ENCODE measurements at regions of chr5 and their contacts with region 1.

Region 1: DNA sequence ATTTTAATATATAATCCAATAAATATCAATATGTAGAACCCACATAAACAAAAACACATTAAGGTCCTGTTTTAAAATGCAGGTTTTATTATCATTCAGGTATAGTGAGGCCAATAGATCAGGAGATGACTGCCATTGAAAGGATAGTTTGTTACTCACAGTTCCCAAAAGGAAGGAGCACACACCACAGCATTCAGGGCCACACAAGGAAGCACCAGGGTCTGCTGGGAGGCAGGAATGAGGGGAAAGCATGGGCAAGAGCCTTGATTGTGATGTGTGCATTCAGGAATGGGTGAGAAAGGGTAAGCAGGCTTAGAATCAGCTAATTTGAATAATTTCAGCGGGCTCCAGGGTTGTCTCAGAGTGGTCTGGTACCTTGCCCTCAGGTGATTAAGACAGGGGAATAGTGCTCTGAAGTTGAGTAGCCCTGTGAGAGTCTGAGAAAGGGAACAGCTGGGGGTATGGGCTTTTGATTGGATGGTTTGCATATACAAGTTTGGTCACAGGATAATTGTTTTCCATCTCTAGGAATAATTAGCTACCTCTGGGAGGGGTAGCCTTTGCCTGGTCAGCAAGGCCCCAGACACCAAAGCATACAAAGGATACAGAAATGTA is 19.8 kb upstream of the OTULIN start:
- DNase-seq: no peak
- H3K4me3 Mint-ChIP-seq: no peak overlapping the region
- H3K27ac Mint-ChIP-seq: no peak overlapping the region
- H3K4me1 Mint-ChIP-seq: peaks cover 2% of the 10 kb centered on the region
- H3K27me3 Mint-ChIP-seq: peaks cover 9% of the 10 kb centered on the region

Region 2: DNA sequence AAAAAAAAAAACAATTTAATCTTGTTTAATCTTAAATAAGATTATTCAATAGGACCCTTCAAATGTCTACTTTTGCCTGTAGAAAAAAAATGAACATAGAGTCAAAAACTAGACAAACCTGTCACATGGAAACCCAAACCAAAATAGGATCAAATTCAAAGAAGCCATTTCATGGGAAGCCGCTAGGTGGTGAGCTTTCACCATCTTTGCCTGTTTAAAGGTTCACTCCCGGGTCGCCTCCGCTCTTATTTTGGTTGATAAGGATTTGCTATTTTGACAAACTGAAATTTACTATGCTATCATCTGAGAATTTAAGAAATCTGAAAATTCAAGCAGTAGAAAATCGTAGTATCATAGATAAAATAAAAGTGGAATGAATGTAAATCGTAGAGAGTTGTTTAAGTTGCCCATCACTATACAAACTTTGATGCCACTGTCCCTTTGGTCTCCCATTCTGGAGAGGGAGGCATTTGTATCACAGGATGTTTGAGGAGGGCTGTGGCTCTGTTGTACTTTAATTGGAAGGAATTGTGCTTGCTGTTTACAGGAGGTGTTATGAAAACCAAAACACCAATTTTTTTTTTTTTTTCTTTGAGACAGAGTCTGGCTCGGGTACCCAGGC is 656.8 kb before region 1 on chr5:
- CTCF ChIA-PET with region 1: interaction called, 4 read pairs
- intact Hi-C with region 1: loop called (anchors 1 kb)
- DNase-seq: peak; percentile 55
- H3K4me3 Mint-ChIP-seq: no peak overlapping the region
- H3K27ac Mint-ChIP-seq: no peak overlapping the region
- H3K4me1 Mint-ChIP-seq: no peaks in the 10 kb centered on the region
- H3K27me3 Mint-ChIP-seq: no peaks in the 10 kb centered on the region

Region 3: GRCh38 chr5:14364576-14365472 is 279.9 kb before region 1 on chr5:
- CTCF ChIA-PET with region 1: interaction called, 73 read pairs
- intact Hi-C with region 1: loop called (anchors 1 kb)
- DNase-seq: peak; percentile 34
- H3K4me3 Mint-ChIP-seq: no peak overlapping the region
- H3K27ac Mint-ChIP-seq: no peak overlapping the region
- H3K4me1 Mint-ChIP-seq: peaks cover 24% of the 10 kb centered on the region
- H3K27me3 Mint-ChIP-seq: no peaks in the 10 kb centered on the region

Region 4: GRCh38 chr5:14399054-14399692 is 245.6 kb before region 1 on chr5:
- CTCF ChIA-PET with region 1: interaction called, 73 read pairs
- intact Hi-C with region 1: loop called (anchors 1 kb)
- DNase-seq: no peak
- H3K4me3 Mint-ChIP-seq: no peak overlapping the region
- H3K27ac Mint-ChIP-seq: no peak overlapping the region
- H3K4me1 Mint-ChIP-seq: peaks cover 12% of the 10 kb centered on the region
- H3K27me3 Mint-ChIP-seq: no peaks in the 10 kb centered on the region

Region 5: GRCh38 chr5:14615344-14615743 is 29.4 kb before region 1 on chr5:
- CTCF ChIA-PET with region 1: no interaction called
- intact Hi-C with region 1: no loop called
- DNase-seq: no peak
- H3K4me3 Mint-ChIP-seq: no peak overlapping the region
- H3K27ac Mint-ChIP-seq: no peak overlapping the region
- H3K4me1 Mint-ChIP-seq: no peaks in the 10 kb centered on the region
- H3K27me3 Mint-ChIP-seq: no peaks in the 10 kb centered on the region

Region 6: DNA sequence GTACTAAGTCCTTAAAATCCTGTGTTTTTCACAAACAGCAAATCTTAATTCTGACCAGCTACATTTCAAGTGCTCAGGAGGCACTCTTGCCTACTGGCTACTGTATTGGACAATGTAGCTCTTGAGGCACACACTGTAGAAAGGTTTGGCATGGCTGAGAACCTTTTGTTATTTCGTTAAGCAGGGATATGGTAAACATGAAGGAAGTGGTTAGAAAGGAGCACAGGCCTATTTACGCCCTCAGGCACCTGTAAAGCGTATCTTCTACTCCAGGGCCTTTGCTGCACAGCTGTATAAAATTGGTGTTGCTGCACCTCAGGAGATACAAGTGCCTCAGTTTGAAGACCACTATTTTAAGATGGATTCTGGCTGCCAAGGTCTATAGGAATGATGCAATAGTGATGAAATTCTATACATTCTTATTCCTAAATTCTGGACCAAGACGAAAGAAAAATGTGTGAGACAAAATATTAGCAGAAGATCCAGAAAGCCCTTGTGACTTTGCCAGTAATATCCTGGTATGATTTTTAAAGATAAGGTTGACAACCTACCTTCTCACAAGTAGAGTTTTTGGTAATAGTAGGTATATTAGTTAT is 10.5 kb after region 1 on chr5:
- CTCF ChIA-PET with region 1: interaction called, 15 read pairs
- intact Hi-C with region 1: no loop called
- DNase-seq: no peak
- H3K4me3 Mint-ChIP-seq: no peak overlapping the region
- H3K27ac Mint-ChIP-seq: no peak overlapping the region
- H3K4me1 Mint-ChIP-seq: peaks cover 39% of the 10 kb centered on the region
- H3K27me3 Mint-ChIP-seq: peaks cover 6% of the 10 kb centered on the region

Region 7: DNA sequence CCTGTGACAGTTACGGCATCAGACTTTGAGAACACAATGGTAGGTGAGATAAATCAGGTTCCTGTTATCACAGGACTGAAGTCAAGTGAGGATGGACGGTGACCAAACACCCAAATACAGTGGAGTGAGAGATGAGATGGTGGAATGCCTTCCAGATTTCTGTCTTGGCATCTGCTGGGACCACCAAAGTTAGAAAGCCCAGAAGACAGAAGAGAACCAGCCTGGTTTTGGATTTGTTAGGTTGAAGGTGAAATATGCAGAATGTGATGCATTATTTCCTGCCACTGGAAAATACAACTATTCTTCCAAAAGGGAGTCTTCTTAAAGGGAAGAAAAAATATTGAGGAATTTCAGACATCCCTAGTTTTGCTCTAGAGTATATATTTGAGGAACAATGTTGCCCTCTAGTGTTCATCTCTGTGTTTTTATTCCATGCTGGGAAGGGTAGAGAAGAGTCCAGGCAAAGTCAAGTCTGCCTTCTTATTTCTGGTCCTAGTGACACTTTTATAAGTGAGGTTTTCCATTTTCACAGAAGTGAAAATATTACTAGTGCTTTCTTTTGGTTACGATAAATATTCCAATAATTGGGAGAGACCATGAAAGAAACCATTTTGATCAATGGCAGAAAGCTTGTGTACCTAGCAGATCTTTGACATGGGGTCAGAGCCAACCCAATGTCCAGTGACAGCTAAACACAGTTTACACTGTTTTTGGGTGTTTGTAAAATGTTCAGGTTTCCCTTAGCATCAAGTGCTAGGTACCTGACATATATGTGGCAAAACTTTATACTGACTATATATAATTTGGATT is 369.1 kb after region 1 on chr5:
- CTCF ChIA-PET with region 1: interaction called, 3 read pairs
- intact Hi-C with region 1: loop called (anchors 1 kb)
- DNase-seq: no peak
- H3K4me3 Mint-ChIP-seq: no peak overlapping the region
- H3K27ac Mint-ChIP-seq: no peak overlapping the region
- H3K4me1 Mint-ChIP-seq: no peaks in the 10 kb centered on the region
- H3K27me3 Mint-ChIP-seq: no peaks in the 10 kb centered on the region

Measured in activated naive CD4-positive, alpha-beta T cell treated with anti-CD3 and anti-CD28 coated beads for 36 hours (primary cell).